AG04449 (cell line): ENCODE measurements at regions of chr13 and their contacts with region 1.

Region 1: GRCh38 chr13:44523146-44524015 is 52.7 kb downstream of the TSC22D1 start:
- DNase-seq: peak; percentile 33
- H3K4me3 ChIP-seq: no peak overlapping the region
- CTCF ChIP-seq: no peak

Region 2: GRCh38 chr13:44540761-44541434 is 17.5 kb after region 1 on chr13:
- CTCF ChIA-PET with region 1: interaction called, 11 read pairs
- POLR2A ChIA-PET with region 1: no interaction called
- DNase-seq: no peak
- H3K4me3 ChIP-seq: no peak overlapping the region
- CTCF ChIP-seq: no peak